ENCODE measurements at regions of chr13 and their contacts with region 1.

Region 1: GRCh38 chr13:42354241-42355091 is 82.5 kb downstream of the AKAP11 start:
- DNase-seq: peak; percentile 67
- ATAC-seq: peak; percentile 62
- H3K4me3 Mint-ChIP-seq: peak overlapping the region; percentile 67
- H3K27ac Mint-ChIP-seq: peak overlapping the region; percentile 100
- H3K4me1 Mint-ChIP-seq: peaks cover 73% of the 10 kb centered on the region
- H3K27me3 Mint-ChIP-seq: no peaks in the 10 kb centered on the region

Region 2: GRCh38 chr13:42377640-42378382 is 23.3 kb after region 1 on chr13:
- CTCF ChIA-PET with region 1: interaction called, 3 read pairs
- POLR2A ChIA-PET with region 1: interaction called, 14 read pairs
- intact Hi-C with region 1: loop called (anchors 1 kb)
- DNase-seq: peak; percentile 60
- ATAC-seq: peak; percentile 83
- H3K4me3 Mint-ChIP-seq: no peak overlapping the region
- H3K27ac Mint-ChIP-seq: peak overlapping the region; percentile 97
- H3K4me1 Mint-ChIP-seq: peaks cover 74% of the 10 kb centered on the region
- H3K27me3 Mint-ChIP-seq: no peaks in the 10 kb centered on the region

Region 3: GRCh38 chr13:42405665-42406390 is 51.4 kb after region 1 on chr13:
- CTCF ChIA-PET with region 1: interaction called, 4 read pairs
- POLR2A ChIA-PET with region 1: interaction called, 3 read pairs
- intact Hi-C with region 1: loop called (anchors 1 kb)
- DNase-seq: peak; percentile 83
- ATAC-seq: peak; percentile 86
- H3K4me3 Mint-ChIP-seq: peak overlapping the region; percentile 48
- H3K27ac Mint-ChIP-seq: peak overlapping the region; percentile 94
- H3K4me1 Mint-ChIP-seq: peaks cover 62% of the 10 kb centered on the region
- H3K27me3 Mint-ChIP-seq: no peaks in the 10 kb centered on the region

Region 4: GRCh38 chr13:42660333-42660965 is 306.0 kb after region 1 on chr13:
- CTCF ChIA-PET with region 1: no interaction called
- POLR2A ChIA-PET with region 1: no interaction called
- intact Hi-C with region 1: no loop called
- DNase-seq: no peak
- ATAC-seq: no peak
- H3K4me3 Mint-ChIP-seq: no peak overlapping the region
- H3K27ac Mint-ChIP-seq: no peak overlapping the region
- H3K4me1 Mint-ChIP-seq: no peaks in the 10 kb centered on the region
- H3K27me3 Mint-ChIP-seq: peaks cover 32% of the 10 kb centered on the region

Region 5: GRCh38 chr13:42720113-42720857 is 365.8 kb after region 1 on chr13:
- CTCF ChIA-PET with region 1: no interaction called
- POLR2A ChIA-PET with region 1: no interaction called
- intact Hi-C with region 1: loop called in 1 of 2 experiments (anchors 1 kb)
- DNase-seq: peak; percentile 59
- ATAC-seq: peak; percentile 97
- H3K4me3 Mint-ChIP-seq: no peak overlapping the region
- H3K27ac Mint-ChIP-seq: peak overlapping the region; percentile 27
- H3K4me1 Mint-ChIP-seq: peaks cover 10% of the 10 kb centered on the region
- H3K27me3 Mint-ChIP-seq: peaks cover 20% of the 10 kb centered on the region

Region 6: DNA sequence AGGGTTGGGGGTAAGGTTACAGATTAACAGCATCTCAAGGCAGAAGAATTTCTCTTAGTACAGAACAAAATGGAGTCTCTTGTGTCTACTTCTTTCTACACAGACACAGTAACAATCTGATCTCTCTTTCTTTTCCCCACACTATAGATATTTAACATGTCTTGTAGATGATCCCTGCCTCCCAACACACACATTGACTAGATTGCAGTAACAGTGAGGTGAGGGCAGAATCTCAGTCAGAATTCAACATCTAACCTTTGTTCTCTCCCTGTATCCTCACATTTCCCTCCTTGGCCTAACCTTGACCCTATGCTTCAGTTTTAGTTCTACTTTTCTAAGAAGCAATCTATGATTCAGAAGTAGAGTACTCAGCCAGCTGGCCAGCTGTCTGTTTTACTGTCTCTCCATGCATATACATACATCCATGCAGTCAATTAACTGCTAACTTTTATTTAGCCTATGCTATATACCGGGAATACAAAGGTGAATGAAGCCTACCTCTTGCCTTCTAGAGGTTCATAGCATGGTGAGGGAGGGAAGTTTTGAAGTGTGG is 687.0 kb after region 1 on chr13:
- CTCF ChIA-PET with region 1: no interaction called
- POLR2A ChIA-PET with region 1: no interaction called
- intact Hi-C with region 1: loop called in 1 of 2 experiments (anchors 10 kb)
- DNase-seq: no peak
- ATAC-seq: no peak
- H3K4me3 Mint-ChIP-seq: no peak overlapping the region
- H3K27ac Mint-ChIP-seq: peak overlapping the region; percentile 17
- H3K4me1 Mint-ChIP-seq: peaks cover 72% of the 10 kb centered on the region
- H3K27me3 Mint-ChIP-seq: no peaks in the 10 kb centered on the region

Measured in activated CD4-positive, alpha-beta T cell treated with anti-CD3 and anti-CD28 coated beads for 36 hours (primary cell).